ENCODE measurements at regions of chr1 and their contacts with region 1.

Region 1: GRCh38 chr1:8026153-8026975 is at the start of gene ERRFI1:
- DNase-seq: peak; percentile 95 to 98 (median 97)
- H3K4me3 ChIP-seq: peak within 1 kb of the TSS; percentile 68
- H3K27ac ChIP-seq: peak within 1 kb of the TSS; percentile 94 to 99
- H3K4me1 ChIP-seq: peaks cover 10% of the 10 kb centered on the region
- H3K27me3 ChIP-seq: no peaks in the 10 kb centered on the region
- CTCF ChIP-seq: peak in 2 of 3 donors; percentile 36 to 37
- EP300 ChIP-seq: peak; percentile 35
- POLR2A ChIP-seq: peak; percentile 99
- total RNA-seq, gene ERRFI1: 61.3 to 256 (median 110) TPM

Region 2: GRCh38 chr1:8121261-8122170 is 95.2 kb after region 1 on chr1:
- intact Hi-C with region 1: loop called in 1 of 4 experiments (anchors 10 kb)
- DNase-seq: peak; percentile 68 to 88 (median 71)
- H3K4me3 ChIP-seq: no peak overlapping the region
- H3K27ac ChIP-seq: peak overlapping the region; percentile 44 to 79
- H3K4me1 ChIP-seq: peaks cover 20% of the 10 kb centered on the region
- H3K27me3 ChIP-seq: no peaks in the 10 kb centered on the region
- CTCF ChIP-seq: no peak
- EP300 ChIP-seq: no peak
- POLR2A ChIP-seq: peak; percentile 21

Region 3: DNA sequence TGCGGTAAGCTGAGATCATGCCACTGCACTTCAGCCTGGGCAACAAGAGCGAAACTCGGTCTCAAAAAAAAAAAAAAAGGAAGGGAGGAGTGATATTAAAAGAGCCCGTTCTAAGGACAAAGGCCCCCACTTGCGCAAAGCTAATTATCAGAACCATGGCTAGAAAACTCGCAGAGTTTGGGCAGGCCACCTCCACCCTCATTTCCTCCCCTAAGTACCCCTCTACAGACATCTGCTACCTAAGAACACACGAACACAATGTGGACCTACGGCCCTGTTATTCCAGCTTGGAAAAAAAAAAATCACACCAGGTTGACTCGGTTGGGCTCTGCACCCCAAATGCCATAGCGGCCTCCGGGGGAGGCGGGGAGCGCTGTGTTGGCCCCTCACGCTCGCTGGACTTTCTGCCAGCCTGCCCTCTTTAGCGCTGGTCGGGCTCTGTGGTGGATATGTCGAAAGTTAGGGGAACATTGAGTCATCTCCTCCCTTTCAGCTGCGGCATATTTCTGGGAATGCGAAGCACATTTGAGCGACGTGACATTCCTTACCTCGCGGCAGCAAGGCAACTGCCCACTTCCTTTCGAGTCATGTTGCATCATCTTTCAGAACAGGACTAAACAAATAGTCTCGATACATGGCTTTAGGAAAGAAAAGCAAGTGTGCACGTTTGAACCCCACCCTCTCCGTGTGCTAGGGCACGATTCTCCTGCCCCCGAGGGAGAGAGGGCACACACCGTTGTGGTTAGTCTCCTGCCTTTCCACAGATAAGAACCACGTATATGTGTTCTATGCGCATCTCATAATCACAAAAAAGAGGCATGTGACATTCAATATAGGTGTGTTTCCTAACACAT is 185.5 kb after region 1 on chr1:
- intact Hi-C with region 1: loop called in 1 of 4 experiments (anchors 10 kb)
- DNase-seq: no peak
- H3K4me3 ChIP-seq: no peak overlapping the region
- H3K27ac ChIP-seq: no peak overlapping the region
- H3K4me1 ChIP-seq: peaks cover 6% of the 10 kb centered on the region
- H3K27me3 ChIP-seq: no peaks in the 10 kb centered on the region
- CTCF ChIP-seq: no peak
- EP300 ChIP-seq: no peak
- POLR2A ChIP-seq: no peak

Region 4: GRCh38 chr1:8314346-8315280 is 288.2 kb after region 1 on chr1:
- intact Hi-C with region 1: loop called in 3 of 4 experiments (anchors 5 to 10 kb)
- DNase-seq: peak; percentile 77 to 88 (median 86)
- H3K4me3 ChIP-seq: no peak overlapping the region
- H3K27ac ChIP-seq: no peak overlapping the region
- H3K4me1 ChIP-seq: peaks cover 12% of the 10 kb centered on the region
- H3K27me3 ChIP-seq: no peaks in the 10 kb centered on the region
- CTCF ChIP-seq: peak; percentile 65 to 93 (median 88)
- EP300 ChIP-seq: no peak
- POLR2A ChIP-seq: peak; percentile 16

Measured in ovary (tissue), 10 donors.